CD4-positive, alpha-beta T cell (primary cell): ENCODE measurements at regions of chr1 and their contacts with region 1.

Region 1: DNA sequence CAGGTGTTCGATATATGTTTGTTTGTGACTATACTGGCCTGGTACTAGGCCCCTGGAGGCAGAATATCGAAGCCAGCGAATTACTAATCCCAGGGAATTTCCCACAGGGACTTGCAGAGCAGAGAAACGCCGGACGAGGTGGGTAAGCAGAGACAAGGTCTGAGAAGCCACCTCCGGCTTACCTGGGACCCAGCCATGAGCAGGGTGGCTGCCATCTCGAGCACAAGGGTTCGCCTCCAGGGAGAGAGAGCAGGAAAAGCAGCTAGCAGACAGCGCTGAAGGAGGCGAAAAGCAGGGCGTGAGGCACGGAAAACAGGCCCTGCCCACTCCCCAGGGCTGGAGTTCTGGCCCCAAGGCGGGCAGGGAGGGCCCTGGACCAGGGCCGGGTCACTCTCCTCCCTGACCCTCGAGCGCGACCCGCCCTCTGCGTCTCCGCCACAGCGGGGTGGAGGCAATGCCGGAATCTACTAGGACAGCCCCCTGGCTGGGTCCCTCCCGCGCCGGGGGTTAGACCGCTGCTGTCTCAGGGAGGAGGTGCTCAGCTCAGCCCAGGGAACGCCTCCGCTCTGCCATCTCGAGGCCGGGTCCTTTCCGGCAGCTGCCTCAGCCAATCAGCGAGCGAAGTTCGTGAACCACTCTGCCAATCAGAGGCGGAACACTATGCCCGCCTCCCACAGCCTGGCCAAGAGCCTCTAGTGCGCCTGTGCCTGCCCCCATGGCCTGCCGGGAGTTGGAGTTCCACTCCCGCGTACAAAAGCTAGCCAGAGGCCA is 1.7 kb downstream of the ZNF436 start:
- DNase-seq: peak; percentile 94 to 99 (median 96)
- ATAC-seq: peak; percentile 90
- H3K4me3 ChIP-seq: peak overlapping the region; percentile 71
- H3K4me3 Mint-ChIP-seq: peak overlapping the region; percentile 100
- H3K27ac ChIP-seq: peak overlapping the region; percentile 90 to 91
- H3K27ac Mint-ChIP-seq: peak overlapping the region; percentile 95
- H3K4me1 ChIP-seq: peaks cover 29% of the 10 kb centered on the region
- H3K4me1 Mint-ChIP-seq: peaks cover 43% of the 10 kb centered on the region
- H3K27me3 ChIP-seq: no peaks in the 10 kb centered on the region
- H3K27me3 Mint-ChIP-seq: no peaks in the 10 kb centered on the region
- CTCF ChIP-seq: no peak

Region 2: DNA sequence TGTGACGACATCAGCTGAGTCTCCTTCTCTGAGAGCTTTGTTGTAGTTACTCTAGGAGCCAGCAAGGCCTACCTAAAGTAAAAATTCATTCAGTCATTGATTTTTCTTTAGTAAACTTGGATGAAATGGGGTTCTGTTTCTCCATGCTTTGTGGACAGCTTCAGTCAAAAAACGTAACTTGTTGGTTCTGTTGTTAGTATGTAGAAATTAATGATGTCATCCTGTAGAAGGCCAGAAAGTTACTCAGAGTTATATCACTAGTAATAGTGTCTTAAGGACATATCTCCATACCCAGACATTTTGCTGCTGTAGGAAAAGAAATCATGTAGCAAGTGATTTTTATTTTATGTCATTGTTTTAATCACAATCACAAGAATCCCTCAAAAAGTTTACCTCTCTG is 305.7 kb before region 1 on chr1:
- CTCF ChIA-PET with region 1: no interaction called
- POLR2A ChIA-PET with region 1: no interaction called
- intact Hi-C with region 1: no loop called
- DNase-seq: no peak
- ATAC-seq: no peak
- H3K4me3 ChIP-seq: no peak overlapping the region
- H3K4me3 Mint-ChIP-seq: no peak overlapping the region
- H3K27ac ChIP-seq: no peak overlapping the region
- H3K27ac Mint-ChIP-seq: no peak overlapping the region
- H3K4me1 ChIP-seq: no peaks in the 10 kb centered on the region
- H3K4me1 Mint-ChIP-seq: no peaks in the 10 kb centered on the region
- H3K27me3 ChIP-seq: no peaks in the 10 kb centered on the region
- H3K27me3 Mint-ChIP-seq: no peaks in the 10 kb centered on the region
- CTCF ChIP-seq: no peak

Region 3: GRCh38 chr1:23152966-23153684 is 214.9 kb before region 1 on chr1:
- CTCF ChIA-PET with region 1: no interaction called
- POLR2A ChIA-PET with region 1: no interaction called
- intact Hi-C with region 1: no loop called
- DNase-seq: no peak
- ATAC-seq: no peak
- H3K4me3 ChIP-seq: no peak overlapping the region
- H3K4me3 Mint-ChIP-seq: no peak overlapping the region
- H3K27ac ChIP-seq: no peak overlapping the region
- H3K27ac Mint-ChIP-seq: no peak overlapping the region
- H3K4me1 ChIP-seq: peaks cover 6% of the 10 kb centered on the region
- H3K4me1 Mint-ChIP-seq: peaks cover 36% of the 10 kb centered on the region
- H3K27me3 ChIP-seq: no peaks in the 10 kb centered on the region
- H3K27me3 Mint-ChIP-seq: no peaks in the 10 kb centered on the region
- CTCF ChIP-seq: no peak

Region 4: GRCh38 chr1:23168457-23169194 is 199.3 kb before region 1 on chr1 and contains the start of gene LUZP1:
- CTCF ChIA-PET with region 1: no interaction called
- POLR2A ChIA-PET with region 1: no interaction called
- intact Hi-C with region 1: loop called in 1 of 2 experiments (anchors 10 kb)
- DNase-seq: peak; percentile 80 to 95 (median 83)
- ATAC-seq: peak; percentile 90
- H3K4me3 ChIP-seq: peak within 1 kb of the TSS; percentile 87
- H3K4me3 Mint-ChIP-seq: peak within 1 kb of the TSS; percentile 97
- H3K27ac ChIP-seq: peak within 1 kb of the TSS; percentile 68 to 74
- H3K27ac Mint-ChIP-seq: peak within 1 kb of the TSS; percentile 79
- H3K4me1 ChIP-seq: peaks cover 25% of the 10 kb centered on the region
- H3K4me1 Mint-ChIP-seq: peaks cover 46% of the 10 kb centered on the region
- H3K27me3 ChIP-seq: no peaks in the 10 kb centered on the region
- H3K27me3 Mint-ChIP-seq: no peaks in the 10 kb centered on the region
- CTCF ChIP-seq: no peak
- total RNA-seq, gene LUZP1: 20.1 to 23.7 TPM

Region 5: GRCh38 chr1:23330846-23331245 is 37.1 kb before region 1 on chr1:
- CTCF ChIA-PET with region 1: no interaction called
- POLR2A ChIA-PET with region 1: no interaction called
- intact Hi-C with region 1: no loop called
- DNase-seq: no peak
- ATAC-seq: no peak
- H3K4me3 ChIP-seq: no peak overlapping the region
- H3K4me3 Mint-ChIP-seq: no peak overlapping the region
- H3K27ac ChIP-seq: no peak overlapping the region
- H3K27ac Mint-ChIP-seq: no peak overlapping the region
- H3K4me1 ChIP-seq: peaks cover 2% of the 10 kb centered on the region
- H3K4me1 Mint-ChIP-seq: peaks cover 42% of the 10 kb centered on the region
- H3K27me3 ChIP-seq: no peaks in the 10 kb centered on the region
- H3K27me3 Mint-ChIP-seq: no peaks in the 10 kb centered on the region
- CTCF ChIP-seq: no peak

Region 6: DNA sequence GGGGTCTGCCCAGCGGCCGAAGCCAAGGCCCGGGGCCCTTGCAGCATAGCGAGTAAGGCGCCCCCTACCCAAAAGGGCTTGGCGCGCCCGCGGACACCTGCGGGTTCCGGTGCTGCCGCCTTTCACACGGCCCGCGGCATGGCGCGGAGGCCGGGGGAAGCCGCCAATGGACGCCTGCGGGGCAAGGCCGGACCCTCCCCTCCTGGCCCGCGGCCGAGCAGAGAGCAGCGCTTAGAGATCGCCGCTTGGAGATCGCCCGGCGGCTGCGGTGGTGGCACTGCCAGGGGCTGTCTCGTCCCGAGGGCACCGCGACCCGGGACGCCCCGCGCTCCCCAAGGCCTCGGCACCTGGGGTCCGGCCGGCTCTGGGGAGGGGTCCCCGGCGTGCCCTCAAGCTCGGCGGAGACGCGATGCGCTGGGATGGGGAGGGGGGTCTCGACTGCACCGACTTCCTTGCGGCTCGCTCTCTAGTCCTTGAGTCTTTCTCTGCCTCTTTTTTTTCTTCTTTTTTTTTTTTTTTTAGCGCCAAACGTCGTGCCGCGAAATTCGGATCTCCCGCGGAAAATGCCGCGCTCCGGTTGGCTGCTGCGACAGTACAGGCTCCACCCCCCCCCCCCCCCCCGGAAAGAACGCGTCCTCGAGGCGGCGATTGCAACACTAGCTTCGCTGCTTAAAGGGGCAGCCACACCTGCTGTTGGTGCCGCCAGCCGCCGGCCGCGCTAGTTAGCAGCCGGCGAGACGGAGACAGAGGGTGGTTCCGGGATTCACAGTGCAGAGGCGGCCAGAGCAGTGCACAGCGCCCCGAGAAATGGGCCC is 163.0 kb after region 1 on chr1 and contains the start of gene E2F2:
- CTCF ChIA-PET with region 1: no interaction called
- POLR2A ChIA-PET with region 1: no interaction called
- intact Hi-C with region 1: loop called (anchors 2 to 10 kb)
- DNase-seq: peak; percentile 66 to 92 (median 80)
- ATAC-seq: peak; percentile 79
- H3K4me3 ChIP-seq: peak within 1 kb of the TSS; percentile 44
- H3K4me3 Mint-ChIP-seq: peak within 1 kb of the TSS; percentile 91
- H3K27ac ChIP-seq: peak within 1 kb of the TSS in 1 of 2 donors; percentile 58
- H3K27ac Mint-ChIP-seq: peak within 1 kb of the TSS; percentile 84
- H3K4me1 ChIP-seq: peaks cover 78% of the 10 kb centered on the region
- H3K4me1 Mint-ChIP-seq: peaks cover 80% of the 10 kb centered on the region
- H3K27me3 ChIP-seq: no peaks in the 10 kb centered on the region
- H3K27me3 Mint-ChIP-seq: no peaks in the 10 kb centered on the region
- CTCF ChIP-seq: no peak
- total RNA-seq, gene E2F2: 0.50 to 0.69 TPM

Region 7: DNA sequence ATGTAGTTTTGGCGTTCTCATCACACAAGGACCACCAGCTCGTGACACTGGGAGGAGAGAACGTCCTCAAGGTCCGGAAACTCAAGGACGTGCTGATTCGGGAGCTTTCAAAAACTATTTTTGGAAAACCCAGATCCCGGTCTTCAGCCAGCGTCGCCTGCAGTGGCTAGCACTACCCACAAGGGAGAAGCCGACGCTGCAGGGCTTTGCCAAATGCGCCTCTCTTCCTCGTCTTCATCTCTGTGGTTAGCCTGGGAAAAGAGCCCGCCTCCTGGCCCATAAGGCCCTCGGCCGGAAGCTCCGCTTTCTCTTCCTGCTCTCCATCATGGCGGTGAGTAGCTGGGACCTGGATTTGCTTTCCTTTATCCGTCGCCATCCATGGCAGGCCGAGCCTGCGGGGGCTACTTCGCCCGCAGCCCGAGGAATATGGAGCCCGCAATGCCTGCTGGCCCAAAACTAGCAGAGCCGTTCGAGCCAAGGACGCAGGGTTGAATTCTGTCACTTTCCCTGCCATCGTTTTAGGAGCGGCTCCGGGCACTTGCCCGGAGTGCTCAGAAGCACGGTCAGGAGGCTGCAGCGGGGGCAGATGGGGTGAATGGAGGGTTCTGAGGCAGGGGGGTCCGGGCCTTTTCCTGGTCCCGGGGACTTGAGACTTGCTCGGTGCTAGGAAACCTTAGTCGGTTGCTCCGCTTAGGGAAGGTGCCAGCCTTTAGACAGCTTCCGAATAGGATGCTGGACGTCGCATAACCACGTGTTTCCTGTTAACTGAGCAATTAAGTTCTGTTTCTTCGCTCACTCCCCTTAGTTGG is 323.7 kb after region 1 on chr1 and contains the start of gene RPL11:
- CTCF ChIA-PET with region 1: no interaction called
- POLR2A ChIA-PET with region 1: interaction called, 6 read pairs
- intact Hi-C with region 1: loop called in 1 of 2 experiments (anchors 5 kb)
- DNase-seq: peak; percentile 78 to 95 (median 85)
- ATAC-seq: peak; percentile 99
- H3K4me3 ChIP-seq: peak within 1 kb of the TSS; percentile 97
- H3K4me3 Mint-ChIP-seq: peak within 1 kb of the TSS; percentile 99
- H3K27ac ChIP-seq: peak within 1 kb of the TSS; percentile 55 to 87
- H3K27ac Mint-ChIP-seq: peak within 1 kb of the TSS; percentile 95
- H3K4me1 ChIP-seq: peaks cover 40% of the 10 kb centered on the region
- H3K4me1 Mint-ChIP-seq: peaks cover 47% of the 10 kb centered on the region
- H3K27me3 ChIP-seq: no peaks in the 10 kb centered on the region
- H3K27me3 Mint-ChIP-seq: no peaks in the 10 kb centered on the region
- CTCF ChIP-seq: peak; percentile 67
- total RNA-seq, gene RPL11: 2,191 to 2,374 TPM

Region 8: DNA sequence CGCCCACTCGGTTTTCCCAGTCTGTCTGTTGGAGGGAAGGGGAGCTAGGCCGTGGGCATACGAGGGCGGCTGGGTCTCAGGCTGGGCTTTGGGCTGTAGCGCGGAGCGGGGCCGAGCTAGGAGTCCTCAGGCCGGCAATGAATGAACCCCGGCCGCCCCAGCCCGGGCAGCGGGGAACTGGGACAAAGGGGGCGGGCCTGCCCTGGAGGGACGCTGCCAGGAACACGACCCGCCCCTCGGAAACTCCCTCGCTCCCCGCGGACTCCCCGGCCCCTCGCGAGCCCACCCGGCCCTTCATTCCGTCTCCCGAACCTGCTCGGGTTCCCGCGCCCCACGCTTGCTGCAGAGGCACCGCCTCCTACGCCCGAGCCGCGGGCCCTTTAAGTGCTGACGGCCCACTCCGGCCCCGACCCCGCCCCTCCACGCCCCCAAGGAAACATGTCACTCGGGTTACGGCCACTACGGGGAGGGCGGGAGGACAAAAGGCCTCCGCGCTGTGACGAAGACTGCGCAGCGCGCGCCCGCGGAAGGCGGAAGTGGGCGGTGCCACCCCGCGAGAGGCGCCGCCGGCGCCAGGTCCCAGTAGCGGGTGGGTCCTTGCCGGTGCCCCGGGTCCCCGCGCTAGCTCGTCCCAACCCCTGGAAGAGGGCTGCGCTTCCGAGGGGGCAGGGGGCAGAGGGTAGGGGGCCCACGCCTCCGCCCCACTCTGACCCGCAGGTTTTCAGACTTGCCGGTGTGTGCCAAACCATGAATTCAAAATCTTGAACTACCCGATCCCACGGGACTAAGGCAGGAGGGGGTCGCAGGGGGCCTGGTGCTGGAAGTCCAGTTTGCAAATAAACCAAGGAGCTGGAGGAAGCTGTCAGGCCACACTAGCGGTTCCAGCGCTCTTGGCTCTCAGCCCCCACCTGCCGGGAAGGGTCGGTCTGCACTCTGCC is 432.7 kb after region 1 on chr1 and contains the start of gene GALE:
- CTCF ChIA-PET with region 1: no interaction called
- POLR2A ChIA-PET with region 1: no interaction called
- intact Hi-C with region 1: loop called in 1 of 2 experiments (anchors 10 kb)
- DNase-seq: peak; percentile 94 to 99 (median 97)
- ATAC-seq: peak; percentile 90
- H3K4me3 ChIP-seq: peak within 1 kb of the TSS; percentile 81
- H3K4me3 Mint-ChIP-seq: peak within 1 kb of the TSS; percentile 97
- H3K27ac ChIP-seq: peak within 1 kb of the TSS; percentile 78 to 82
- H3K27ac Mint-ChIP-seq: peak within 1 kb of the TSS; percentile 92
- H3K4me1 ChIP-seq: peaks cover 27% of the 10 kb centered on the region
- H3K4me1 Mint-ChIP-seq: peaks cover 14% of the 10 kb centered on the region
- H3K27me3 ChIP-seq: no peaks in the 10 kb centered on the region
- H3K27me3 Mint-ChIP-seq: no peaks in the 10 kb centered on the region
- CTCF ChIP-seq: no peak
- total RNA-seq, gene GALE: 5.4 to 6.9 TPM

Region 9: GRCh38 chr1:24308365-24309015 is 940.5 kb after region 1 on chr1:
- CTCF ChIA-PET with region 1: no interaction called
- POLR2A ChIA-PET with region 1: no interaction called
- intact Hi-C with region 1: no loop called
- DNase-seq: no peak
- ATAC-seq: no peak
- H3K4me3 ChIP-seq: no peak overlapping the region
- H3K4me3 Mint-ChIP-seq: no peak overlapping the region
- H3K27ac ChIP-seq: no peak overlapping the region
- H3K27ac Mint-ChIP-seq: no peak overlapping the region
- H3K4me1 ChIP-seq: no peaks in the 10 kb centered on the region
- H3K4me1 Mint-ChIP-seq: no peaks in the 10 kb centered on the region
- H3K27me3 ChIP-seq: no peaks in the 10 kb centered on the region
- H3K27me3 Mint-ChIP-seq: peaks cover 26% of the 10 kb centered on the region
- CTCF ChIP-seq: no peak

Region 10: DNA sequence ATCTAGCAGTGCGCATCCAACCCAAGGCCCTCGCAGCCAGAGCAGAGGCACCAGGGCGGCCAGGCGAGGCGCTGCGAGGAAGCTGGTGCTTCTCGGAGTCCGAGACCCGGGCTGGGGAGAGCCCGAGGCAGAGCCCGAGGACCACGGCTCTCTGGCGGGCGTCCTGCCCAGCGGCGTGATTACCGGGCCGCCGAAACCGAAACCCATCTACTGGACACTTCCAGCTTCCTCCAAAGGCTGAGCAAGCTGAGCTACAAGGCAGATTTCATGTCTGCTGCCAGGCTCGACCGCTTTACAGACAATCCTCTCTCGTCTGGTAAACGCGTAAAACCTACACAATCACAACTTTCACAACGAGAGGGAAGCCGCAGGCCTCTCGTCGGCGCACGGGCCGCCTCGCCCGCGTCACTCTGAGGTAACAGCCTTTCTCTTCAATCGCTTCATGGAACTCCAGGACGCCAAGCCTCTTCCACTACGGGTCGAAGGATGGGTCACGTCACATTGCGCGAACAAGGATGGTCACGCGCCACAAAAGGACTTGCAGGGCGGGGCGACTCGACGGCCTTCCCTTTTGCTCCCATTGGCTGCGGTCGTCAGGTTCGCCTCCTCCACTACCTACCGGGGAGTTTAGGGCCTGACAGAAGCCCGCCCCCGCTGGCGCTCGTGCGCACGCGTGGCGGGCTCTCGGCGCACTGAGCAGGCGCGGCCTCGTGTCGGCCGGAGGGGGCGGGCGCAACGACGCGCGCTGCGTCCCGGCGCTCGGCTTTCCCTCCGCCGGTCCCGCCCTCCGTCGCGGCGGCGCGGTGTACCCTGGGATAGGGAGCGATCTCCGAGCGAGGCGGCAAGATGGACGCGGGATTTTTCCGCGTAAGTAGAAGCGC is 1274.7 kb after region 1 on chr1 and contains the start of gene SRRM1:
- CTCF ChIA-PET with region 1: no interaction called
- POLR2A ChIA-PET with region 1: no interaction called
- intact Hi-C with region 1: loop called in 1 of 2 experiments (anchors 5 kb)
- DNase-seq: peak; percentile 96 to 100 (median 98)
- ATAC-seq: peak; percentile 87
- H3K4me3 ChIP-seq: peak within 1 kb of the TSS; percentile 89
- H3K4me3 Mint-ChIP-seq: peak within 1 kb of the TSS; percentile 90
- H3K27ac ChIP-seq: peak within 1 kb of the TSS; percentile 99
- H3K27ac Mint-ChIP-seq: peak within 1 kb of the TSS; percentile 96
- H3K4me1 ChIP-seq: peaks cover 26% of the 10 kb centered on the region
- H3K4me1 Mint-ChIP-seq: peaks cover 55% of the 10 kb centered on the region
- H3K27me3 ChIP-seq: no peaks in the 10 kb centered on the region
- H3K27me3 Mint-ChIP-seq: no peaks in the 10 kb centered on the region
- CTCF ChIP-seq: no peak
- total RNA-seq, gene SRRM1: 338 to 360 TPM